AG04449 (cell line): ENCODE measurements at regions of chr4 and their contacts with region 1.

Region 1: GRCh38 chr4:173370477-173371291 is at the start of gene SAP30:
- DNase-seq: peak; percentile 91
- H3K4me3 ChIP-seq: peak within 1 kb of the TSS; percentile 89
- CTCF ChIP-seq: no peak

Region 2: GRCh38 chr4:173218411-173219125 is 152.1 kb before region 1 on chr4:
- CTCF ChIA-PET with region 1: no interaction called
- POLR2A ChIA-PET with region 1: no interaction called
- DNase-seq: peak; percentile 34
- H3K4me3 ChIP-seq: no peak overlapping the region
- CTCF ChIP-seq: no peak

Region 3: DNA sequence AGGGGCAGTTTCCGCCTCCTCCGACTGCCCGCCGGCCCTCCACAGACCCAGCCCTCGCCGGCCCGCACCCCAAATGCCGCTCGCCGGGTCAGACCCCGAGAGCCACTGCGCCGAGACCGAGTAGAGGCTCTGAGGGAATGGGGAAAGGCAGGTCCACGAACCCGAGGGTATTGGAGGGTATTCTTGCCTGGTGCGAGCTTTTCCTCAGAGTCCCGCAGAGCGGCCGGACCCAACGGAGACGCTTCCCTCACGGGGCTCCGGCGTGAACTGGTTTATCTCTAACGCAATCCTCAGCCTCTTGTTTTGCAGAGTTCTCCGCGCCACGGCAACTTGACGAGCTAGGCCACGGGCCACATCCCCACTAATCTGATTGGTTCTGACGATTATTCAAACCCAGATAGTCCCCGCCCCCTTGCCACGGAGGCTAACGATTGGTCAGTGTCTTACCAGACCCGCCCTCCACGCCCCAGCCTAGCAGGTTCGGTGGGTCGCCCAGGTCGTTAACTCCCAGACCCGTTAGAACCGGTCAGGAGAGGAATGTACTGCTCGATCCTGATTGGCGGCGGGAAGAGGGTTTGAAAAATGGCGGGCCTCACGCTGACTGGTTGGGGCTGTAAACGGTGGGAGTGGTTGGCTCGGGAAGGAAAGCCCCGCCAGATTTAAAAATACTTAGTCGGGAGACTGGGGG is 36.5 kb before region 1 on chr4 and contains the start of gene HMGB2:
- CTCF ChIA-PET with region 1: interaction called, 5 read pairs
- POLR2A ChIA-PET with region 1: interaction called, 52 read pairs
- DNase-seq: peak; percentile 100
- H3K4me3 ChIP-seq: peak within 1 kb of the TSS; percentile 98
- CTCF ChIP-seq: no peak

Region 4: GRCh38 chr4:173398779-173399415 is 28.2 kb after region 1 on chr4 and contains the start of gene SCRG1:
- CTCF ChIA-PET with region 1: interaction called, 3 read pairs
- POLR2A ChIA-PET with region 1: interaction called, 20 read pairs
- DNase-seq: no peak
- H3K4me3 ChIP-seq: peak within 1 kb of the TSS; percentile 41
- CTCF ChIP-seq: no peak